Right ventricle myocardium superior (tissue), 1 donor: ENCODE measurements at regions of chr9 and their contacts with region 1.

Region 1: GRCh38 chr9:131478421-131478868 is 24.3 kb upstream of the POMT1 start:
- DNase-seq: peak; percentile 63
- ATAC-seq: no peak

Region 2: DNA sequence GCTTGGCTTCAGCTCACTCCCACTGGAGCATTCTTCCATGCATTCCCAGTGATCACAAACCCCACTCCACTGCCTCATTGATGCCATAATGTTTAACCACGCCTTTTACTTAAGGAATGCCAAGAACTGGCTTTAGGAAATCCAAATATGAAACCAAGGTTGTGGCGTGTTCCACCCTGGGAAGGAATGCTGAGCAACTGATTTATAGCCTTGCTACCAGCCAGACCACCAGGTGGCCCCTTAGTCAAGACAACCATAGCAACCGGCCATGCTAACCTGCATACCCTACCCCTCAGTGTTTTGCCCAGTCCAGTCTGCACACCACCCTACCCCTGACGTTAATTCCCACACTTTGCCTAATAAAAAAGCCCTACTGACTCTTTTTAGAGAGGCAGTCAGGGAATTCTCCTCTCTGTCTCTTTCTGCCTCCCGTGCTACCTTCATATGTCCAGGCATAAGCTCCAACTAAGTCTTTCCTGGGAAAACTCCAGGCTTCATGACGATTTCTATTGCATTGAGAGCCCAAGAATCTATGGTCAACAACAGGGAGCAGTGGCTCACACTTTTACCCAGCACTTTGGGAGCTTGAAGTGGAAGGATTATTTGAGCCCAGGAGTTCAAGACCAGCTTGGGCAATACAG is 111.6 kb before region 1 on chr9:
- intact Hi-C with region 1: loop called (anchors 10 kb)
- DNase-seq: peak; percentile 51
- ATAC-seq: peak; percentile 78

Region 3: GRCh38 chr9:131441441-131441840 is 37.0 kb before region 1 on chr9:
- intact Hi-C with region 1: no loop called
- DNase-seq: no peak
- ATAC-seq: no peak

Region 4: GRCh38 chr9:131517761-131518190 is 39.3 kb after region 1 on chr9:
- intact Hi-C with region 1: no loop called
- DNase-seq: peak; percentile 59
- ATAC-seq: peak; percentile 87

Region 5: GRCh38 chr9:131539223-131539923 is 60.9 kb after region 1 on chr9:
- intact Hi-C with region 1: no loop called
- DNase-seq: no peak
- ATAC-seq: no peak

Region 6: GRCh38 chr9:132516911-132517310 is 1038.5 kb after region 1 on chr9:
- intact Hi-C with region 1: no loop called
- DNase-seq: no peak
- ATAC-seq: no peak